Mammary epithelial cell (primary cell): ENCODE measurements at regions of chr16 and their contacts with region 1.

Region 1: GRCh38 chr16:71746442-71747046 is 22.0 kb upstream of the PHLPP2 start:
- DNase-seq: peak; percentile 29
- H3K4me3 ChIP-seq: no peak overlapping the region
- H3K27ac ChIP-seq: no peak overlapping the region
- H3K4me1 ChIP-seq: no peaks in the 10 kb centered on the region
- H3K27me3 ChIP-seq: no peaks in the 10 kb centered on the region
- CTCF ChIP-seq: peak; percentile 65 to 80

Region 2: DNA sequence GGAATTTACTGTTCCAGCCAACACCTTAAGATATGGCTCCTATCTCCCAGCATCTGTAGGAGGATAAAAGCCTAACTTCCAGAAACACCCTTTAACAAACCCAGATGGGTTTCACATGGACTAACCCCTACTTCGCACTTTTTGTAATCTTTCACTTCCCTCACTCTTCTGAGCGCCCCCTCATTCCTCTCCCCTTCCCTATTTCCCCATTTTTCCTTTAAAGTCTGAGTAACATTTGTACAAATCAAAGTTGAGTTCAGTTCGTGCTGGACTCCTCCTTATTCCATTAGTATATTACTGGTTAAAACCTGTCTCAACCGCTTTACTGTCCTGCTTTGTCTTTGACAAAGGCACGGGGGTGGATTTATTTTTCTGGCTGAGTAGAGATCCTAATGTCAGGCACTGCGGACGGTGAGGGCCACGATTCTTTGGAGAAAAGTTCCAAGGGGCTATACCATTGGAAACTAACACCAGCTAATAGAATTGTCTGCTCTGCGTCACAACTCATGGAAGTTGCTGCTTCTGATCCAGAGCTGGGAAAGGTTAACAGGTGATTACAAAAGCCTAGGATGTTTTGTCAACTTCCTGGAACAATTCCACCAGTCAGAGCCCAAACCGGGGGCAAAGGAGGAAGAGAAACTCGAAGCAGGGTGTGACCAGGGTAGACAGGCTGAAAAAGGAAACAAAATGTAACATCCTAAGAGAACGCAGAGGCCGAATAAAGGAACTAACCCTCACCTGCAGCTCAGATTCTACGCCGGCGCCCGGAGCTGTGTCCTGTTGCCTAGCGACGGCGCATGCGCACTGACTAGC is 182.2 kb before region 1 on chr16:
- CTCF ChIA-PET with region 1: no interaction called
- dilution Hi-C with region 1: no loop called
- in situ Hi-C with region 1: no loop called
- intact Hi-C with region 1: loop called (anchors 10 kb)
- DNase-seq: no peak
- H3K4me3 ChIP-seq: peak overlapping the region; percentile 41 to 59 (median 55)
- H3K27ac ChIP-seq: peak overlapping the region; percentile 44
- H3K4me1 ChIP-seq: peaks cover 9% of the 10 kb centered on the region
- H3K27me3 ChIP-seq: no peaks in the 10 kb centered on the region
- CTCF ChIP-seq: no peak

Region 3: GRCh38 chr16:71669932-71670536 is 76.5 kb before region 1 on chr16:
- CTCF ChIA-PET with region 1: no interaction called
- dilution Hi-C with region 1: no loop called
- in situ Hi-C with region 1: no loop called
- intact Hi-C with region 1: loop called (anchors 10 kb)
- DNase-seq: no peak
- H3K4me3 ChIP-seq: no peak overlapping the region
- H3K27ac ChIP-seq: no peak overlapping the region
- H3K4me1 ChIP-seq: no peaks in the 10 kb centered on the region
- H3K27me3 ChIP-seq: no peaks in the 10 kb centered on the region
- CTCF ChIP-seq: peak in 1 of 2 donors; percentile 9